MCF 10A (cell line): ENCODE measurements at regions of chr14 and their contacts with region 1.

Region 1: DNA sequence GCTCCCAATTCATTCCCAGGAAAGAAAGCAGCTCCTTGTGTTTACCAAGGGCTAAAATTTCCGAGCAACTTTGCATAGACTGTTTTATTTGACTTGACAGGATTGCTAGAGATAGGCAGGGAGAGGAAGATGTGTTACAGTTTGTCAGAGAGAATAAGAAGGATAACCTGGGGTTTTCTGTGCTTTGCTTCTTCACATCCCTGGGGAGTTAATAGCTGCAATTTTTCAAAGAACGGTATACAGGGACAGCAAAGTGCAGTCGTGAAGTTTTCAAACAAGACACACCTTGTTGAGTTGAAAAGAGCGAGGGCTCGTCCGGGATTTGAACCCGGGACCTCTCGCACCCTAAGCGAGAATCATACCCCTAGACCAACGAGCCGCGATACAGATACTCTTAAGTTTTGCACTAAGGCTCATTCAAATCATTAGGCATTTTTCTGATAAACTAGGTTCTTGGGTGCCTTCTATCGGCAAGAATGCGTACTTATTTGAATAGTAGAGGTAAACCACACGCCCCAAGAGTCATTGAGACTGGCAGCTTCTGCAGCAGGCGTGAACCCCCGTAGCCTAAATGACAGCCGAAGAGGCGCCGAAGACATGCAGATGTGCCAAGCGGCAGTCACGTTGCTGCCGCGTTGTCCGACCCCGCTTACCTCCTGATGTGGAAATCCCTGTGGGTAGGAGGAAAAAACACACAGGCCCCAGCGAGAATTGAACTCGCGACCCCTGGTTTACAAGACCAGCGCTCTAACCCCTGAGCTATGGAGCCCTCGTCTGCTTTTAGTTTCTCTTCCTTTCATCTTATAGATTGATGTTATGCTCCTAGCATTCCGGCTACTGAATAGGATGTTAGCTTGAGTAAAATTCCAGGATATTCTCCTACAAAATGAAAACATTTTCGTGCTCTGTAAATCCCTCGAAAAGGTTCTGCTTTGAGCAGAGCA is 22.2 kb upstream of the RNASE12 start:
- DNase-seq: peak; percentile 96
- H3K4me3 Mint-ChIP-seq: no peak overlapping the region
- H3K27ac Mint-ChIP-seq: no peak overlapping the region
- H3K4me1 Mint-ChIP-seq: no peaks in the 10 kb centered on the region
- H3K27me3 Mint-ChIP-seq: no peaks in the 10 kb centered on the region
- CTCF ChIP-seq: peak; percentile 80

Region 2: GRCh38 chr14:20197459-20197858 is 415.9 kb before region 1 on chr14:
- CTCF ChIA-PET with region 1: no interaction called
- POLR2A ChIA-PET with region 1: no interaction called
- intact Hi-C with region 1: no loop called
- DNase-seq: no peak
- H3K4me3 Mint-ChIP-seq: no peak overlapping the region
- H3K27ac Mint-ChIP-seq: no peak overlapping the region
- H3K4me1 Mint-ChIP-seq: peaks cover 6% of the 10 kb centered on the region
- H3K27me3 Mint-ChIP-seq: peaks cover 65% of the 10 kb centered on the region
- CTCF ChIP-seq: no peak

Region 3: GRCh38 chr14:20343092-20343861 is 270.1 kb before region 1 on chr14 and contains the start of gene PARP2:
- CTCF ChIA-PET with region 1: interaction called, 7 read pairs
- POLR2A ChIA-PET with region 1: interaction called, 27 read pairs
- intact Hi-C with region 1: loop called (anchors 2 kb)
- DNase-seq: peak; percentile 100
- H3K4me3 Mint-ChIP-seq: peak within 1 kb of the TSS; percentile 78
- H3K27ac Mint-ChIP-seq: peak within 1 kb of the TSS; percentile 92
- H3K4me1 Mint-ChIP-seq: peaks cover 7% of the 10 kb centered on the region
- H3K27me3 Mint-ChIP-seq: no peaks in the 10 kb centered on the region
- CTCF ChIP-seq: no peak
- total RNA-seq, gene PARP2: 30.4 and 33.4 TPM in 2 replicates

Region 4: DNA sequence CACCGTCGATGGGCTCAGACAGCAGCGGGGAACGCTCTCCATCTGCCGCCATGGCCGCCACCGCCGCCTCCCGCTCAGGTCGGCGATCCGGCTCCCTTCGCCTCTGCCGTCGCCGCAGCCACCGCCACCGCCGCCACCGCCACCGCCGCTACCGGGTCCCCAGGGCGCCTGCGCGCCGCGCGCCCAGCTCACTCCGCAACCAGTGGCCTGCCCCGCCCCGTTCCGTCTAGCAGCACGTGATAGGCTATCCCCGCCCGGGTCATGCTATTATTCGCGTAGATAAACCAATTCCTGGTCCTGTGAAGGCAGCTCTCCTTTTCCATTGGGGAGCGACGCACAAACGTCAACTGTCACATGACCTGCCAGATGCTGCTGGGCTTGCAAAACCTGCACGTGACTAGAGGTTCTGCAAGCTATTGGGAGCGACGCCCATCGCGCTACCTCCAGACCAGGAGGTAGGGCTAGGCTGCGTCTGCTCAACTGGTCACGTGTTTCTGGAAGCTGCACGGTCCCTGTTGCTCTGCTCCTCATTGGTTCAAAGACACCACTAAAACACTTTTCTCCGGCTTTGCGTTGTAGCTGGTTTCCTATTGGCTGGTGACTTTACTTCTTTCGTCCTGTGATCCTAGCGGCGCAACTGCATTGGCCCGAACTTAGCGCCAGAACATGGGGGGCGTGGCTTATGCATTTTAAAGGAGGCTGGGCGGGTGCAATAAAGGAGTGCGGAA is 151.9 kb before region 1 on chr14 and contains the start of gene PIP4P1:
- CTCF ChIA-PET with region 1: interaction called, 26 read pairs
- POLR2A ChIA-PET with region 1: interaction called, 13 read pairs
- intact Hi-C with region 1: loop called (anchors 1 kb)
- DNase-seq: peak; percentile 100
- H3K4me3 Mint-ChIP-seq: peak within 1 kb of the TSS; percentile 76
- H3K27ac Mint-ChIP-seq: peak within 1 kb of the TSS; percentile 92
- H3K4me1 Mint-ChIP-seq: peaks cover 21% of the 10 kb centered on the region
- H3K27me3 Mint-ChIP-seq: no peaks in the 10 kb centered on the region
- CTCF ChIP-seq: no peak
- total RNA-seq, gene PIP4P1: 22.5 and 34.9 TPM in 2 replicates

Region 5: GRCh38 chr14:20583923-20584322 is 29.4 kb before region 1 on chr14:
- CTCF ChIA-PET with region 1: interaction called, 10 read pairs
- POLR2A ChIA-PET with region 1: no interaction called
- intact Hi-C with region 1: no loop called
- DNase-seq: no peak
- H3K4me3 Mint-ChIP-seq: no peak overlapping the region
- H3K27ac Mint-ChIP-seq: no peak overlapping the region
- H3K4me1 Mint-ChIP-seq: no peaks in the 10 kb centered on the region
- H3K27me3 Mint-ChIP-seq: peaks cover 40% of the 10 kb centered on the region
- CTCF ChIP-seq: no peak

Region 6: DNA sequence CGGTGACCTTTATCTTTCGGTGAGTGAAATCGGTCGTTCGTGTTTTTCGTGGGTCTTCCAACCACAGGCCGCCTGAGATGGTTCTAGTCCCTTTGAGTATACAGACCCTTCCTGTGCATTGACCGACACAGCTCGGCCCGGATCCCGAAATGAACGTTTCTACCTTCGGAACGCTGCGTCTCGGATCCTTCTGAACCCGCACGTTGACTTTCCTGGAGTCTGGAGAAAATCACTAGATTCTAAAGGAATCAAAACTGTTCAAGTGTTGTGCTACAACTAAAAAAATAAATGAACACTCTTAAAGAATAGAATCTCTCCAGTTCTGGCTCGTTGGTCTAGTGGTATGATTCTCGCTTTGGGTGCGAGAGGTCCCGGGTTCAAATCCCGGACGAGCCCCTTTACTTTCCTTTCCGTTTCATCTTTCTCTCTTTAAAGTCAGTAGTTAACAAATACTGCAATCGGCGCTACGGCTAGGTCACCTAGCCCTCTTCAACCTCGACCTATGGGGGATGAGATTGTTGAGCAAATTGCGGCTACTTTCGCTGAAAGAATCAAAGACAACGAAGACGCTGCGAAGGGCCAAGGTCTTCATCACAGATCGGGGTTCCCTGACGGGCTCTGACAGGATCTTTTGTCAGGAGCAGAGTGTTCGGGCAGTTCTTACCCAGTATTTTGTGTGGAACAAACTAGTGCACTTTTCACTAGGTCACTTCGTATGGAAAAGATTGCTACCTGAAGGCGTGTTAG is 19.5 kb after region 1 on chr14:
- CTCF ChIA-PET with region 1: interaction called, 8 read pairs
- POLR2A ChIA-PET with region 1: interaction called, 28 read pairs
- intact Hi-C with region 1: loop called (anchors 1 kb)
- DNase-seq: peak; percentile 82
- H3K4me3 Mint-ChIP-seq: peak overlapping the region; percentile 74
- H3K27ac Mint-ChIP-seq: peak overlapping the region; percentile 48
- H3K4me1 Mint-ChIP-seq: peaks cover 23% of the 10 kb centered on the region
- H3K27me3 Mint-ChIP-seq: no peaks in the 10 kb centered on the region
- CTCF ChIP-seq: no peak

Region 7: DNA sequence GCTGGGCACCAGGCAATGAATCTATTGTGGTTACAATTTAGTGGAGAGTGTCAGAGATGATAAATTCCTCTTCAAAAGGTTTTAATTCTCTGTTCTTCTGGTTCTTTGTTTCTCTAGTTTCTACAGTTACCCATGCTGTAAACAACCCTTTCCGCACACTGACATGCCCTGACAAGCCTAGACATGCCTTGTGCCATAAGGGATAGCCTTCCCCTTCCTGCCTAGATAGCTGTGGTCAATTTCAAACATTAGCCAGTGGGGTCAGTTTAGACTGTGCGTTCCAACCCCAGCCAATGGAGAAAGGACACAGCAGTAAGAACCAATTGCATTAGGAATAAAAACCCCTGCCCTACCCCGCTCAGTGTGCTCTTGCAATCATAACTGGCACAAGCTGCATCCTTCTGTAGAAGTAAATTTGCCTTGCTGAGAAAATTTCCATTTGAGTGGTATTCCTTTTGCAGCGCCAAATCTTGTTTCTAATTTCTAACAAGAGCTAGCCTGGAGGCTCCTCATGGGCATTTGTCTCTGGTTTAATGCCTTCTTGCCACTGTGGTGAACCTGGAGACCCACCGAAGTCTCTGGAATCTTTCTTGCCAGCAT is 138.7 kb after region 1 on chr14:
- CTCF ChIA-PET with region 1: no interaction called
- POLR2A ChIA-PET with region 1: no interaction called
- intact Hi-C with region 1: no loop called
- DNase-seq: peak; percentile 17
- H3K4me3 Mint-ChIP-seq: no peak overlapping the region
- H3K27ac Mint-ChIP-seq: no peak overlapping the region
- H3K4me1 Mint-ChIP-seq: no peaks in the 10 kb centered on the region
- H3K27me3 Mint-ChIP-seq: no peaks in the 10 kb centered on the region
- CTCF ChIP-seq: no peak

Region 8: DNA sequence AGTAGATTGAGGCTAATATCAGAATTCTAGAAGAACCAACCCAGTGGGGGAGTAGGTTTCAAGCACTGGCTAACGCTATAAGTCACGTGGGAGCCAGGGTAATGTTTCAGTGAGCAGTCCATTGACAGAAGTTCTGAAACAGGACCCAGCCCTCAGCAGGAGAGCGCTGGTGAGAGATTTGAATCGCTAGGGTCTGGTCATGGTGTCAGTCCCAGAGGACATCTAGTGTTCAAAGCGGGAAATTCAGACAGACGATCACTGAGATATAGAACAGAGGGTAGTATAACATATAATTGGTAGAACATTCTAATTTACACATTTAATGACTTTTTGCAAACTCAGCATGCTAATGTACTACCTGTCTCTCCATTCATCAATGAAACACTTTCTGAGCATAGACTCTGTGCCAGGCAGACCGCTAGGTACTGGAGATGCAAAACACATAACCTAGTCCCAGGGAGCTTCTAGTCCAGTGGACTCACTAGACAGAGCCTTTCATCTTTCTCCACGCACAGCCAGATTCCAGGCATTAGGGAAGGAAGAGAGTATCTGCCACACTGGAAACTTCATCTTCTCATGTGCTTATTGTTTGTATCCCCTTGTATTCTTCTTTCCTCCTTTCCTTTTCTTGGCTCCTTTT is 242.4 kb after region 1 on chr14:
- CTCF ChIA-PET with region 1: interaction called, 4 read pairs
- POLR2A ChIA-PET with region 1: interaction called, 3 read pairs
- intact Hi-C with region 1: loop called (anchors 2 kb)
- DNase-seq: peak; percentile 75
- H3K4me3 Mint-ChIP-seq: no peak overlapping the region
- H3K27ac Mint-ChIP-seq: no peak overlapping the region
- H3K4me1 Mint-ChIP-seq: peaks cover 5% of the 10 kb centered on the region
- H3K27me3 Mint-ChIP-seq: peaks cover 47% of the 10 kb centered on the region
- CTCF ChIP-seq: peak; percentile 68

Region 9: DNA sequence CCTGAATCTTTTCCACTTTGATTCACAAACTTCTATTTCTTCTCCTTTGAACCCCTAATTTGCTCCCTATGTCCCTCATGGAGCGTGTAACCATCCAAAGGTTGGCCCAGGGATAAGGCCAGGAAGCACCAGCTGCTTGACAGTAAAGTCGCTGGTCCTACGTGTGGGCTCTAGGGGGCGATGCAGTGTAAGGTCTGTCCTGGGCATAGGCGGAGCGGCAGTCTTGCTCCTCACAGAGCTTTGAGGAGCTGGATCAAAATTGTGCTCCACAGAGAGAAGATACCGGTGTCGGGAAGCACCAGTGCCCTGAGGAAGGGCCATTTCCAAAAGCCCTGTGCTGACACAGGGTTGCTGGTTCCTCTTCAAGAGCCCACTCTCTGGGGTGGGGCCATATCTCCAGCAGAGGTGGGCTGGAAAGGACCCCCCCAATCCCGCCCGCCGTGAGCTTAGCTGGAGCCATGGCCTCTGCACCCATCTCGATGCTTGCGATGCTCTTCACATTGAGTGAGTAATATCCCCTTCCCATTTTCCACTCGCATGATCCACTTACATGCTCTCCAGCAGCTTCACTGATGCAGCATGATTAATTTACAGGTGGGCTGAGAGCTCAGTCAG is 1110.2 kb after region 1 on chr14:
- CTCF ChIA-PET with region 1: no interaction called
- POLR2A ChIA-PET with region 1: no interaction called
- intact Hi-C with region 1: no loop called
- DNase-seq: peak; percentile 56
- H3K4me3 Mint-ChIP-seq: no peak overlapping the region
- H3K27ac Mint-ChIP-seq: no peak overlapping the region
- H3K4me1 Mint-ChIP-seq: no peaks in the 10 kb centered on the region
- H3K27me3 Mint-ChIP-seq: peaks cover 95% of the 10 kb centered on the region
- CTCF ChIP-seq: no peak